ENCODE measurements at regions of chr3 and their contacts with region 1.

Region 1: DNA sequence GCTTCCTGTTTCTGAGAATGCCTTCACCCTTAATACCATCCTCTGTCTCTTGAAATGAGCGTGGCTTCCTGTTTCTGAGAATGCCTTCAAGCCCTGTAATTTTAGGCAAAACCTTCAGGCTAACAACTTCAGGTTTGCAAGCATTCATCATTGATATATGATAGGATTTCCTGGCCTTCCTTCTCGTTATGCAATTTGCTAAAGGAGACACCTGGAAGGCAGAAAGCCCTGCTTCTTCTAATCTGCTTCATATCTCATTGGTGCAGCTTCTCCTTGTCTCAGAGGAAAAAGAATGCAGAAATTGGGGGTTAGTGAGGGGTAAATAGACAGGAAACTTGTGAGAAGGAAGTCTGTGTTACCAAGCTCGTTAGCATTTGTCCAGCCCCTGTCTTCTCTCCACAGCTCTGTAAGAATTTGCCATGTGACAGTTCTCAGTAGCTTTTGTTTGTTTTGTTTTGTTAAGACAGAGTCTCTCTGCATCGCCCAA is 7.3 kb downstream of the ARL6IP5 start:
- DNase-seq: no peak
- ATAC-seq: peak; percentile 80
- H3K4me3 Mint-ChIP-seq: peak overlapping the region; percentile 82
- H3K27ac Mint-ChIP-seq: peak overlapping the region; percentile 97
- H3K4me1 Mint-ChIP-seq: peaks cover 95% of the 10 kb centered on the region
- H3K27me3 Mint-ChIP-seq: no peaks in the 10 kb centered on the region
- CTCF ChIP-seq: no peak

Region 2: DNA sequence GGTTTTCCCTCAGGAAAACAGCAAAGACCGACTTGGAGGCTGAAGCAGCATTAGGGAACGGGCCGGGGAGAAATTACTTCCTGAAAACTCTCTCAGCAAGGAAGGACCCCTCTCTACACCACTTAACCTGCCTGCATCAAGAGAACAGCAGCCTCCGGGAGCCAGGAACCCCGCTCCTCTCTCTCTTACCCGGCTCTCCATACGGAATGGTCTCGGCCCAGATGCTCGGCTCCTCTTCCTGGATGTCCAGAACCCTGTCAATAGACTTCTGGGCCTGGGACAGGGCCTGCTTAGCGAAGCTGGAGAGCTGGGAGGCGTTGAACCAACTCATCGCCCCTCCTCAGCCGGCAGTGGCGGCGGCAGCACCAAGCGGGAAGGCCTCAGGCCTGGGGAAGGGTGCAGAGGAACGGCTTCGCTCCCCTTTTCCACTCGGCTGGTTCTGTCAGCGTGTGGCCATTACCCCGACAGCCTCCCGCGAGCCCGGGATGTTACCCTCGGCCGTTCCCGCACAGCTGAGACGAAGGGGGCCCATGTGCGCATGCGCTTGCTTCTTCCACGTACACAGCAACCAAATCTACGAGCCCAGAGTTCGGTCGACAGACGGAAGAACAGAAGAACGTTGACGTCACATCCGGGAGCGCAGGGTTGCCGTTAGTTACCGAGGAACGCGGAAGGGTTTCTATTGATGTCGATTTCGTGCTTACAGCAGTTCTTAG is 40.2 kb before region 1 on chr3 and contains the start of gene TMF1:
- CTCF ChIA-PET with region 1: interaction called, 6 read pairs
- POLR2A ChIA-PET with region 1: interaction called, 109 read pairs
- intact Hi-C with region 1: no loop called
- DNase-seq: peak; percentile 92
- ATAC-seq: peak; percentile 86
- H3K4me3 Mint-ChIP-seq: peak within 1 kb of the TSS; percentile 95
- H3K27ac Mint-ChIP-seq: peak within 1 kb of the TSS; percentile 98
- H3K4me1 Mint-ChIP-seq: peaks cover 49% of the 10 kb centered on the region
- H3K27me3 Mint-ChIP-seq: no peaks in the 10 kb centered on the region
- CTCF ChIP-seq: no peak
- total RNA-seq, gene TMF1: 36.8 and 43.6 TPM in 2 replicates

Region 3: GRCh38 chr3:69058180-69058946 is 33.7 kb before region 1 on chr3:
- CTCF ChIA-PET with region 1: interaction called, 3 read pairs
- POLR2A ChIA-PET with region 1: interaction called, 109 read pairs
- intact Hi-C with region 1: no loop called
- DNase-seq: no peak
- ATAC-seq: peak; percentile 99
- H3K4me3 Mint-ChIP-seq: peak overlapping the region; percentile 47
- H3K27ac Mint-ChIP-seq: peak overlapping the region; percentile 92
- H3K4me1 Mint-ChIP-seq: peaks cover 27% of the 10 kb centered on the region
- H3K27me3 Mint-ChIP-seq: no peaks in the 10 kb centered on the region
- CTCF ChIP-seq: no peak

Region 4: DNA sequence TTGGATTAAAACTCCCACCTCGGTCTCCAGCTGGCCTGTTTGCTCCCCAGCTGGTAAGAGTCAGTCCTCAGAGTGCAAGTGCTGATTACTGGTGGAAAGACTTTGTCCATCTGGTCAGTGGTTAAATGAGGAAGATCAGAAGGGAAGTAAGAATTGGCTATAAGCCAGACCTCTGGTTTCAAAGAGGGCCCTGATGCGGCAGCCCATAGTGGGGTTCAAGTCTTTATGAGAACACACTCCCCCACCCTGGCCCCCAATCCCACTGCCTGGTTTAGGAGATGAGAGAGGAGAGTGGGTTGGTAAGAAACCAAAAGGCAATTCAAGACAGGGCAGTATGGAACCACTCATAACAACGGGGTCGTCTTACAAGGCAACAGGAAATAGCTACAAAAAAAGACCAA is 228.8 kb after region 1 on chr3:
- CTCF ChIA-PET with region 1: no interaction called
- POLR2A ChIA-PET with region 1: no interaction called
- intact Hi-C with region 1: no loop called
- DNase-seq: no peak
- ATAC-seq: no peak
- H3K4me3 Mint-ChIP-seq: no peak overlapping the region
- H3K27ac Mint-ChIP-seq: no peak overlapping the region
- H3K4me1 Mint-ChIP-seq: peaks cover 20% of the 10 kb centered on the region
- H3K27me3 Mint-ChIP-seq: no peaks in the 10 kb centered on the region
- CTCF ChIP-seq: no peak